ENCODE measurements at regions of chr2 and their contacts with region 1.

Region 1: DNA sequence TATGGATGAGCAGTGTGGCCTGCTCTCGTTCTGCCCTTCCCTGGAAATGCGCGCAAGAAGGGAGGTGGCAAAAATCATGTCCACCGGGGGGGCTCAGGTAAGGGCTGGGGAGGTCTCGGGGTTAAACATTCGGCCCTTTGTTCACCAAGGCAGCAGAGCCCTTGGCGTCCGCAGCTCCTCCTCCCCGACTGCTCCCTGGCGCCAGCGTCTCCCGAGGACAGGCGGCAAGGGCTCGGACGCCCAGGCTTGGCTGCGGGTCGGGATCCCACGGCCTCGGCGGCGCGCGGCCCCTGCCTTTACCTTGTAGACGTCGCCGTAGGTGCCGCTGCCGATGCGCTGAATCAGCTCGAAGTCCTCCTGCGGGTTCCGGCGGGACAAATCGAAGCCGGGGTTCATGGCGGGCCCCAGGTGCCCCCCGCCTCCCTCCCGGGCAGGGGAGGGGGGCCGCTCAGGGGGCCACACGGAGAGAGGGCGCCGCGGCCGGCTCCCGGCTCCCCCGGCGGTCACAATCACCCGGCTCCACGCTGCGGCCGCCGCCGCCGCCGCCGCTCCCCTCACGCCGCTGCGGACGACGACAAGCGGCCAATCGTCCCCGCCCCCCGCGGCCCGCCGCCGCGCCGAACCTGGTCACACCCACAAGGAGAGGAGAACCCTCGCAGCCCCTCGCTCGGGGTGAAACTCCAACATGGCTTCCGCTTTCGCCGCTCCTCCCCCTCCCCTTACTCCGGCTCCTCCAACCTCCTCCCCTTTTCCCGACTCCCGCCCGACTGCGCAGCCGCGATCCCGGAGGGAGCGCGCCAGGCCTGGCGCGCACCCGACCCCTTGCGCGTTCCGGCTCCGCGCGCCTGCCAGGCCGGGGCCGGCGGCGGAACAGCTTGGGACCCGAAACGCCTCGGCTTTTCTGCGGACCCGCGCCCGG is at the start of gene MAP4K3:
- DNase-seq: peak; percentile 95 to 97 (median 96)
- ATAC-seq: peak; percentile 76
- H3K4me3 ChIP-seq: peak within 1 kb of the TSS; percentile 81
- H3K27ac ChIP-seq: peak within 1 kb of the TSS; percentile 89
- H3K4me1 ChIP-seq: peaks cover 33 to 39% of the 10 kb centered on the region in 2 experiments
- H3K27me3 ChIP-seq: no peaks in the 10 kb centered on the region
- CTCF ChIP-seq: no peak
- EP300 ChIP-seq: no peak
- POLR2A ChIP-seq: peak; percentile 76; the same call in 1 of the 2 replicates
- RAD21 ChIP-seq: 0 out of 4 replicates have a peak, but pooled peaks of 1 of the 2 experiments have one; percentile 7
- polyA plus RNA-seq, gene MAP4K3: 3.1 to 4.4 TPM

Region 2: GRCh38 chr2:39124000-39124745 is 312.7 kb before region 1 on chr2:
- CTCF ChIA-PET with region 1: no interaction called
- POLR2A ChIA-PET with region 1: no interaction called
- in situ Hi-C with region 1: no loop called
- intact Hi-C with region 1: loop called (anchors 10 kb)
- DNase-seq: peak; percentile 88 to 99 (median 89)
- ATAC-seq: peak; percentile 82
- H3K4me3 ChIP-seq: peak overlapping the region; percentile 56
- H3K27ac ChIP-seq: peak overlapping the region; percentile 85
- H3K4me1 ChIP-seq: peaks cover 28% of the 10 kb centered on the region in 2 experiments; a peak in 4 of 5 replicates
- H3K27me3 ChIP-seq: no peaks in the 10 kb centered on the region
- CTCF ChIP-seq: peak; percentile 60 to 89 (median 65)
- EP300 ChIP-seq: peak; percentile 50
- POLR2A ChIP-seq: peak; percentile 84
- RAD21 ChIP-seq: 0 out of 4 replicates have a peak, but pooled peaks have one; percentile 14 to 18

Region 3: GRCh38 chr2:39338502-39338901 is 98.3 kb before region 1 on chr2:
- CTCF ChIA-PET with region 1: no interaction called
- POLR2A ChIA-PET with region 1: no interaction called
- in situ Hi-C with region 1: no loop called
- intact Hi-C with region 1: loop called (anchors 5 kb)
- DNase-seq: peak in 2 of 4 experiments; percentile 36 to 60
- ATAC-seq: peak; percentile 90
- H3K4me3 ChIP-seq: no peak overlapping the region
- H3K27ac ChIP-seq: no peak overlapping the region
- H3K4me1 ChIP-seq: peaks cover 7 to 10% of the 10 kb centered on the region in 2 experiments; a peak in 2 of 5 replicates
- H3K27me3 ChIP-seq: no peaks in the 10 kb centered on the region
- CTCF ChIP-seq: no peak
- EP300 ChIP-seq: peak; percentile 57; the same call in 1 of the 2 replicates
- POLR2A ChIP-seq: no peak
- RAD21 ChIP-seq: no peak

Region 4: GRCh38 chr2:39379643-39380524 is 57.0 kb before region 1 on chr2:
- CTCF ChIA-PET with region 1: interaction called, 3 read pairs
- POLR2A ChIA-PET with region 1: no interaction called
- in situ Hi-C with region 1: no loop called
- intact Hi-C with region 1: loop called (anchors 2 kb)
- DNase-seq: peak; percentile 30 to 66 (median 36)
- ATAC-seq: peak; percentile 79
- H3K4me3 ChIP-seq: no peak overlapping the region
- H3K27ac ChIP-seq: peak overlapping the region; percentile 29; the same call in 1 of the 3 replicates
- H3K4me1 ChIP-seq: peaks cover 3 to 8% of the 10 kb centered on the region in 2 experiments
- H3K27me3 ChIP-seq: no peaks in the 10 kb centered on the region
- CTCF ChIP-seq: peak; percentile 41 to 69 (median 57); a peak in 5 of 6 replicates
- EP300 ChIP-seq: no peak
- POLR2A ChIP-seq: no peak
- RAD21 ChIP-seq: peak; percentile 74 to 86

Region 5: DNA sequence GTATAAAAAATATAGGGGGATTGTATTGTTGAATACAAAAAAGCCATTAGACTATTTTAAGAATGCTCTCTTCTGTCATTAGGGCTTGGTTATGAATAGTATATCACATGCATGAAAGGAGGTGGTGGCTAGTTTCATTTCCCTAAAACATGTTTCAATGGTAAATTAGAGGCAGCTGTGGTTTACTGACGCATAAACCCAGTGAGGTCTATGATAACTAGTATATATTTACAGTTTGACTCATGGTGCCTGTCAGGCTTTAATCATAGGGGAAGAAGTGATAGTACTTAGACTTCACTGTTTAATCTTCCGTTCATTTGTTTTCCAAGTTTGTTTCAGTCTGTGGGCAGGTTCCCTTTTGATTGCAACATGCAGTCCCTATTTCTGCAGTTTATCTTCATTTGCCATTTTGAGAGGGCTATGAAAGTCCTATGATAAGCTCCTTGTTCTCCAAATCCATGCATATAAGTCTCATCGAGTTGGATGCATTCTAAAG is 55.3 kb after region 1 on chr2:
- CTCF ChIA-PET with region 1: no interaction called
- POLR2A ChIA-PET with region 1: no interaction called
- in situ Hi-C with region 1: no loop called
- intact Hi-C with region 1: loop called (anchors 5 kb)
- DNase-seq: peak in 2 of 4 experiments; percentile 46 to 58
- ATAC-seq: peak; percentile 46
- H3K4me3 ChIP-seq: no peak overlapping the region
- H3K27ac ChIP-seq: no peak overlapping the region
- H3K4me1 ChIP-seq: peaks cover 0 to 10% of the 10 kb centered on the region in 2 experiments; a peak in 2 of 5 replicates
- H3K27me3 ChIP-seq: no peaks in the 10 kb centered on the region
- CTCF ChIP-seq: no peak
- EP300 ChIP-seq: peak; percentile 25; the same call in 1 of the 2 replicates
- POLR2A ChIP-seq: no peak
- RAD21 ChIP-seq: no peak; a peak in 1 of 4 replicates

Region 6: GRCh38 chr2:39503277-39503676 is 66.4 kb after region 1 on chr2:
- CTCF ChIA-PET with region 1: no interaction called
- POLR2A ChIA-PET with region 1: no interaction called
- in situ Hi-C with region 1: no loop called
- intact Hi-C with region 1: no loop called
- DNase-seq: no peak
- ATAC-seq: no peak; the same call in 2 of the 3 replicates
- H3K4me3 ChIP-seq: no peak overlapping the region
- H3K27ac ChIP-seq: no peak overlapping the region
- H3K4me1 ChIP-seq: peaks cover 3 to 10% of the 10 kb centered on the region in 2 experiments; a peak in 4 of 5 replicates
- H3K27me3 ChIP-seq: no peaks in the 10 kb centered on the region
- CTCF ChIP-seq: no peak
- EP300 ChIP-seq: no peak
- POLR2A ChIP-seq: no peak
- RAD21 ChIP-seq: no peak

Region 7: GRCh38 chr2:39728941-39729351 is 292.1 kb after region 1 on chr2:
- CTCF ChIA-PET with region 1: no interaction called
- POLR2A ChIA-PET with region 1: no interaction called
- in situ Hi-C with region 1: no loop called
- intact Hi-C with region 1: loop called (anchors 5 kb)
- DNase-seq: peak; percentile 42 to 58 (median 48)
- ATAC-seq: peak; percentile 86
- H3K4me3 ChIP-seq: no peak overlapping the region
- H3K27ac ChIP-seq: no peak overlapping the region
- H3K4me1 ChIP-seq: no peaks in the 10 kb centered on the region
- H3K27me3 ChIP-seq: peaks cover 0 to 10% of the 10 kb centered on the region in 2 experiments; a peak in 1 of 5 replicates
- CTCF ChIP-seq: peak; percentile 72 to 81 (median 80)
- EP300 ChIP-seq: no peak
- POLR2A ChIP-seq: no peak
- RAD21 ChIP-seq: peak; percentile 30 to 63; a peak in 3 of 4 replicates